ENCODE measurements at regions of chr12 and their contacts with region 1.

Region 1: DNA sequence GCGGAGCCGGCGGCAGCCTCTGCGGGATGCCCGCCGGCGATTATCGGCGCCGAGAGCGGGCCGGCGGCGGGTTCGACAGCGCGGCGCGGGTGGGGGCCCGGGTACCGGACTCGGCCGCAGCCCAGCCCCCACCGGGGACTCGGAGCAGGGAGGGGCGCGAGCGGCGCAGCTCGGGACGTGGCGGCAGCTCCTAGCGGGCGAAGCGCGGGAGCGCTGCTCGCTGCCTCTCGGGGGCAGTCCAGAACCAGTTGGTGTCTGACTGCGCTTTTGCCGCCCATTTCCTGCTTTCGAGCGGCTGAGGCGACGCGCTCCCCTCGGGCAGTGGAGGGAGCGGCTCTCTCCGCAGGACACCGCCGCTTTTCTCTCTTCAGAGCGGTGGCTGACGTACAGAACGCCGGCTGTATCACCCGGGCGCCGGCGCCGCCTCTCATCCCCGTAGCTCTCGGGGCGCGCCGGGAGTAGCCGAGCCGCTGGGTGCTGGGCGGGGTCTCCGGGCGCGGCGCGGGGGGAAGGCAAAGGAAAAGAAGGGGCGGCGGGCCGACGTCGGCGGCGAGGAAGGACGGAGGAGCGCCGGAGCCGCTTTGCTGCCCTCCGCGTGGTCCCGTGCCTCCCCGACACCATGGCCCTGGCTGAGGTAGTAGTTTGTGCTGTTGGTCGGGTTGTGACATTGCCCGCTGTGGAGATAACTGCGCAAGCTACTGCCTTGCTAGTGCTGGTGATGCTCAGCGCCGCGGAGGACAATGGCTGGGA is 136.6 kb downstream of the MON2 start:
- DNase-seq: peak; percentile 86
- ATAC-seq: peak; percentile 82
- H3K4me3 Mint-ChIP-seq: peak overlapping the region; percentile 82
- H3K27ac Mint-ChIP-seq: peak overlapping the region; percentile 98
- H3K4me1 Mint-ChIP-seq: peaks cover 35% of the 10 kb centered on the region
- H3K27me3 Mint-ChIP-seq: no peaks in the 10 kb centered on the region

Region 2: GRCh38 chr12:62259993-62260732 is 343.1 kb before region 1 on chr12 and contains the start of gene USP15:
- CTCF ChIA-PET with region 1: interaction called, 3 read pairs
- POLR2A ChIA-PET with region 1: interaction called, 15 read pairs
- DNase-seq: peak; percentile 97
- ATAC-seq: peak; percentile 75
- H3K4me3 Mint-ChIP-seq: peak within 1 kb of the TSS; percentile 90
- H3K27ac Mint-ChIP-seq: peak within 1 kb of the TSS; percentile 96
- H3K4me1 Mint-ChIP-seq: peaks cover 51% of the 10 kb centered on the region
- H3K27me3 Mint-ChIP-seq: no peaks in the 10 kb centered on the region
- total RNA-seq, gene USP15: 159 to 160 TPM

Region 3: GRCh38 chr12:62466594-62467491 is 136.4 kb before region 1 on chr12 and contains the start of gene MON2:
- CTCF ChIA-PET with region 1: interaction called, 6 read pairs
- POLR2A ChIA-PET with region 1: interaction called, 13 read pairs
- DNase-seq: peak; percentile 88
- ATAC-seq: peak; percentile 98
- H3K4me3 Mint-ChIP-seq: peak within 1 kb of the TSS; percentile 90
- H3K27ac Mint-ChIP-seq: peak within 1 kb of the TSS; percentile 96
- H3K4me1 Mint-ChIP-seq: peaks cover 21% of the 10 kb centered on the region
- H3K27me3 Mint-ChIP-seq: peaks cover 3% of the 10 kb centered on the region
- total RNA-seq, gene MON2: 40.0 to 46.6 TPM

Region 4: DNA sequence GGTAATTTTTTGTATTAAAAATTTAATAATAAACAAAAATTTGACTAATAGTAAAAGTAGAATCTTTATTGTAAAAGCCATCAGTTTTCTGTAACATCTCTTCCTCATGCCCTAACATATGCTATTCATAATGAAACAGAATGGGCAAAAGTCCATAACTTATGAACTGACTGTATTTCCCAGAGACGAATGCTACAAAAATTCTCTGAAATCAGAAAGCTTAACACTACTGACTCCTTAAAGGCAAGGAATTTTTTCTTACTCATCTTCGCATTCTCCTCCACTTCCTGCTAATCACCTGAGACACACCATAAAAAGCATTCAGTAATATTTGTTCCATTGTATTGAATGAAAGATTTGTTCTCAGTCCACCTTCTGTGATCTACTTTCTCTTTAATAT is 119.0 kb before region 1 on chr12:
- CTCF ChIA-PET with region 1: no interaction called
- POLR2A ChIA-PET with region 1: no interaction called
- DNase-seq: no peak
- ATAC-seq: no peak
- H3K4me3 Mint-ChIP-seq: no peak overlapping the region
- H3K27ac Mint-ChIP-seq: no peak overlapping the region
- H3K4me1 Mint-ChIP-seq: peaks cover 4% of the 10 kb centered on the region
- H3K27me3 Mint-ChIP-seq: no peaks in the 10 kb centered on the region

Region 5: GRCh38 chr12:62581288-62582064 is 21.8 kb before region 1 on chr12:
- CTCF ChIA-PET with region 1: interaction called, 23 read pairs
- POLR2A ChIA-PET with region 1: interaction called, 7 read pairs
- DNase-seq: no peak
- ATAC-seq: peak; percentile 53
- H3K4me3 Mint-ChIP-seq: no peak overlapping the region
- H3K27ac Mint-ChIP-seq: no peak overlapping the region
- H3K4me1 Mint-ChIP-seq: no peaks in the 10 kb centered on the region
- H3K27me3 Mint-ChIP-seq: no peaks in the 10 kb centered on the region

Region 6: DNA sequence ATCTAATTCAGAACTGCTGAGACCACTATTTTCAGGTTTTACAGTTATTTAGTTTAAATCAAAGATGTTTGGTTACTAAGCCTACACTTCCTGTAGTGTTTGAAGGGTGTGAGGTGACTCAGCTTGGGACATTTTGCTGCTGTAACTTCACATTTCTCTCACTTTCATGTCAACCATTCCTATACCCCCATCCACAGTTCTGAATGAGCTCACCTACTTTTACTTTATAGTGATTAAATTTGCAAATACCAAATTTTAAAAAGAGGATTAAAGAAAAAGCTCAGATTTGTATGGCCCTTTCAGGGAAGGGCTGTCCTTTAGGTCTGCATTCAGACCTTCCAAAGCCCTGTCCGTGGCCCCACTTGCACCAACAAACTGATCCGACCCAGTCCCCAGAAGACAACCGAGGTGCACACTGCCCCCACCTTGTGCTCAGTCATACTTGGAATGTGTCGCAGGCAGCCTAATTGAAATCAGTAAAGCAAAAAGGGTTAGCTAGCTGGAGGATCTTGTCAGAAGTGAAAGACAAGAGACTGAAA is 37.7 kb after region 1 on chr12:
- CTCF ChIA-PET with region 1: interaction called, 4 read pairs
- POLR2A ChIA-PET with region 1: interaction called, 12 read pairs
- DNase-seq: peak; percentile 31
- ATAC-seq: peak; percentile 87
- H3K4me3 Mint-ChIP-seq: no peak overlapping the region
- H3K27ac Mint-ChIP-seq: no peak overlapping the region
- H3K4me1 Mint-ChIP-seq: peaks cover 15% of the 10 kb centered on the region
- H3K27me3 Mint-ChIP-seq: peaks cover 11% of the 10 kb centered on the region

Region 7: DNA sequence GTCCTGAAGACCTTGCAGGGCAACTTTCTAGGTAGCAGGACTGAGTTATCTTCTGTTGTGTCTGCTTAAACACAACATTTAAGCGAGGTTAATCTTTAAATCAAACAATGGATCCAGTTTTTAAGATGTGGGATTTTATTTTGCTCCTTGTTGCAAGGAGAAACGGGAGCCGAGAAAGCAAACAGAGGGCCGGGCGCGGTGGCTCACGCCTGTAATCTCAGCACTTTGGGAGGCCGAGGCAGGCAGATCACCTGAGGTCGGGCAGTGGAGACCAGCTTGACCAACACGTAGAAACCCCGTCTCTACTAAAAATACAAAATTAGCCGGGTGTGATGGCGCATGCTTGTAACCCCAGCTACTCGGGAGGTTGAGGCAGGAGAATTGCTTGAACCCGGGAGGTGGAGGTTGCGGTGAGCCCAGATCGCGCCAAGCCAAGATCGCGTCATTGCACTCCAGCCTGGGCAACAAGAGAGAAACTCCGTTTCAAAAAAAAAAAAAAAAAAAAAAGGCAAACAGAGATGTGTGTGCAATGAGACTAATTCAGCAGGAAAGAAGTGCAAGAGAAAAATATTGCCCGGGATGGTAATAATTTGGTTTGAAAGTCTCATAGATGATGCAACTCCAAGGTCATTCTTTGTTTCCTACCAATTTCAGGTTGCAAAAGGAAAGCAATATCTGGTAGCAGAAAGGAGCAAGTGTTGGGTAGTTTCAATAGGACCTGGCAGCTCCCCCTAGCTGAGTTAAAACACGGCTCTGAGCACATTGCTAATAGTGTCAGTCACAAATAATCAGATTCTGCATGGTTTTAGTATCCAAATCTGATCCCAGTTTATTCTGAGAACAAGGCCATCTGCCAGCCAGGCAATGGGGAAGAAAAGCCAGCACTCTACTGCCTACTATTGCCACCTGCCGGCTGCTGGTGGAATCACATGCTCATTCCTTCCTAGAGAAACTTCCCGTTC is 190.3 kb after region 1 on chr12:
- CTCF ChIA-PET with region 1: interaction called, 22 read pairs
- POLR2A ChIA-PET with region 1: interaction called, 6 read pairs
- DNase-seq: peak; percentile 75
- ATAC-seq: no peak
- H3K4me3 Mint-ChIP-seq: no peak overlapping the region
- H3K27ac Mint-ChIP-seq: no peak overlapping the region
- H3K4me1 Mint-ChIP-seq: peaks cover 5% of the 10 kb centered on the region
- H3K27me3 Mint-ChIP-seq: peaks cover 21% of the 10 kb centered on the region

Region 8: DNA sequence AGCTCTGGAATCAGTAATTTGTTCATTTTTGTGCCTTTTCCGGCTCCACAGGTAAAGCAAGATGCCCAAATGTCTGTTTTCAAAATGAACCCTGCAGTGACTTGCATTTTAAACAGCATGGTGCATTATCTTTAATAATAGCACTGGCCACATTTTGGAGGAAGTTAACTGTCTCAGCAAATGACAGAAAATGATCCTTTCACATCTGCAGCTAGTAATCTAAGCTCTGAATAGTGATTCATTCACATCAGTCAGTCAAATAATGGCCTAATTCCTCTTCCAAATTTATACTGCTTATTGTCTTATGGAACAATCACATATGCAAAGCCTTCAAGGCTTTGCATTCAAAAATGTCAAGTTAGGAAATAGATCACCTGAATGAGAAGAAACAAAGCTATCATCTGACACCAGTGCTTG is 256.1 kb after region 1 on chr12:
- CTCF ChIA-PET with region 1: no interaction called
- POLR2A ChIA-PET with region 1: no interaction called
- DNase-seq: no peak
- ATAC-seq: no peak
- H3K4me3 Mint-ChIP-seq: no peak overlapping the region
- H3K27ac Mint-ChIP-seq: no peak overlapping the region
- H3K4me1 Mint-ChIP-seq: no peaks in the 10 kb centered on the region
- H3K27me3 Mint-ChIP-seq: peaks cover 9% of the 10 kb centered on the region